ENCODE measurements at regions of chr12 and their contacts with region 1.

Region 1: GRCh38 chr12:14554281-14555007 is 13.2 kb downstream of the PLBD1 start:
- DNase-seq: peak; percentile 31
- H3K4me3 ChIP-seq: no peak overlapping the region
- H3K27ac ChIP-seq: no peak overlapping the region
- H3K4me1 ChIP-seq: no peaks in the 10 kb centered on the region
- H3K27me3 ChIP-seq: no peaks in the 10 kb centered on the region
- CTCF ChIP-seq: no peak

Region 2: DNA sequence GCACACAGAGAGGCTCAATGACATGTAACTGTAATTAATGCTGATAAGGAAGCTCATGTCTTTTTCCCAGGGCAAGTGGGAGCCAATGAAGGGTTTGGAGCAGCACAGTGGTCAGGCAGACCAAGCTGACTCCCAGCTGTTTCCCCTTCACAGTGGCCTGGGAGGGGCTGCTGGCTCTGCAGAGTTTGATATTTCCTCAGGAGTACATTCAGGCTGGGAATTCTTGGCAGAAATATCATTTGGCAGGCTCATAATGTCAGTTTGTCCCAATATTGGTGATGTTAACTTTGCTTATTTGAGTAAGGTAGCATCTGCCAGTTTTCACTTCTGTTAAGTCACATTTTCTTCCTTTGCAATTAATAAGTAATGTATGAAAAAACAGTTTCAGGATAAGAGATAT is 1110.9 kb before region 1 on chr12:
- CTCF ChIA-PET with region 1: no interaction called
- POLR2A ChIA-PET with region 1: no interaction called
- intact Hi-C with region 1: loop called (anchors 10 kb)
- DNase-seq: no peak
- H3K4me3 ChIP-seq: no peak overlapping the region
- H3K27ac ChIP-seq: no peak overlapping the region
- H3K4me1 ChIP-seq: no peaks in the 10 kb centered on the region
- H3K27me3 ChIP-seq: no peaks in the 10 kb centered on the region
- CTCF ChIP-seq: no peak

Measured in A673 (cell line).